Endothelial cell of umbilical vein (primary cell): ENCODE measurements at regions of chr4 and their contacts with region 1.

Region 1: GRCh38 chr4:153127760-153128494 is 76.3 kb upstream of the TRIM2 start:
- DNase-seq: peak; percentile 86
- H3K4me3 ChIP-seq: peak overlapping the region in 1 of 3 experiments; percentile 31
- H3K27ac ChIP-seq: no peak overlapping the region
- H3K4me1 ChIP-seq: no peaks in the 10 kb centered on the region
- H3K27me3 ChIP-seq: no peaks in the 10 kb centered on the region
- CTCF ChIP-seq: peak; percentile 77 to 82
- POLR2A ChIP-seq: no peak

Region 2: DNA sequence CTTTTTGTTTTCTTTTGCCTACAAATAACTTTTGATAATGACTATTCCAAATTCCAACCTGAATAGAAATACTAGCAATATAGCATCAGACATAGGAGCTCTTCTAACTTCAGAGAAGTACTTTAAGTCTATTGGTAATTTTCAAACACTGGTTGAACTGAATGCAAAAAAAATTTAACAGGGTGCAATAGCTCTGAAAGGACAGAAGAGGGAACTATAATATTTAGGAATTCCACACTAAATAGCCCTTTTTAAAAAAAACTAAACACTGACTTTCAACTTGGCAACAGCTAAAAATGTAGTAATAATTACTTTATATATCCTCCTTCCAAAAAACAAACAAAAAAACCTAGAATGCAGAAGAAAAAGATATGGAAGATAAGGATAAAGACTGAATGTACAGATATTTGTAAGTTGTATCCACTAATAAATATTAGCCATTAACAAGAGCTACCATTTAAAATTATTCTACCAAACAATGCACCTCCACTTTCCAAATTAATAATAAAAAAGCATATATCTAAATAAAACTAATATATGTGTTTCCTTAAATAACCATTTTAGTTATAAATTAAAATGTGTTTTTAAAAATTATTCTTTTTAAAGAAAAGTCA is 673.4 kb before region 1 on chr4:
- CTCF ChIA-PET with region 1: interaction called, 18 read pairs
- POLR2A ChIA-PET with region 1: no interaction called
- dilution Hi-C with region 1: no loop called
- intact Hi-C with region 1: loop called (anchors 5 kb)
- DNase-seq: peak; percentile 38
- H3K4me3 ChIP-seq: no peak overlapping the region
- H3K27ac ChIP-seq: no peak overlapping the region
- H3K4me1 ChIP-seq: no peaks in the 10 kb centered on the region
- H3K27me3 ChIP-seq: no peaks in the 10 kb centered on the region
- CTCF ChIP-seq: peak; percentile 30 to 35
- POLR2A ChIP-seq: no peak

Region 3: GRCh38 chr4:152594978-152595925 is 532.7 kb before region 1 on chr4:
- CTCF ChIA-PET with region 1: no interaction called
- POLR2A ChIA-PET with region 1: no interaction called
- dilution Hi-C with region 1: no loop called
- intact Hi-C with region 1: no loop called
- DNase-seq: no peak
- H3K4me3 ChIP-seq: no peak overlapping the region
- H3K27ac ChIP-seq: no peak overlapping the region
- H3K4me1 ChIP-seq: no peaks in the 10 kb centered on the region
- H3K27me3 ChIP-seq: peaks cover 7 to 8% of the 10 kb centered on the region in 2 experiments
- CTCF ChIP-seq: no peak
- POLR2A ChIP-seq: no peak

Region 4: GRCh38 chr4:152779513-152780266 is 348.2 kb before region 1 on chr4 and contains the starts of genes ARFIP1 and TIGD4:
- CTCF ChIA-PET with region 1: interaction called, 8 read pairs
- POLR2A ChIA-PET with region 1: no interaction called
- dilution Hi-C with region 1: no loop called
- intact Hi-C with region 1: loop called (anchors 2 kb)
- DNase-seq: peak; percentile 96
- H3K4me3 ChIP-seq: peak within 1 kb of the TSS; percentile 67 to 76 (median 74)
- H3K27ac ChIP-seq: peak within 1 kb of the TSS; percentile 56
- H3K4me1 ChIP-seq: peaks cover 21% of the 10 kb centered on the region
- H3K27me3 ChIP-seq: peaks cover 0 to 11% of the 10 kb centered on the region in 2 experiments
- CTCF ChIP-seq: peak in 1 of 2 donors; percentile 4
- POLR2A ChIP-seq: peak; percentile 62
- total RNA-seq, gene ARFIP1: 24.2 and 24.6 TPM in 2 replicates
- total RNA-seq, gene TIGD4: 0.14 and 0.18 TPM in 2 replicates

Region 5: GRCh38 chr4:152937336-152938236 is 190.3 kb before region 1 on chr4:
- CTCF ChIA-PET with region 1: interaction called, 3 read pairs
- POLR2A ChIA-PET with region 1: no interaction called
- dilution Hi-C with region 1: no loop called
- intact Hi-C with region 1: loop called (anchors 10 kb)
- DNase-seq: peak; percentile 26
- H3K4me3 ChIP-seq: peak overlapping the region; percentile 49 to 57 (median 51)
- H3K27ac ChIP-seq: no peak overlapping the region
- H3K4me1 ChIP-seq: peaks cover 17% of the 10 kb centered on the region
- H3K27me3 ChIP-seq: peaks cover 52 to 74% of the 10 kb centered on the region in 2 experiments
- CTCF ChIP-seq: no peak
- POLR2A ChIP-seq: no peak

Region 6: GRCh38 chr4:153089742-153090141 is 38.2 kb before region 1 on chr4:
- CTCF ChIA-PET with region 1: interaction called, 21 read pairs
- POLR2A ChIA-PET with region 1: no interaction called
- dilution Hi-C with region 1: no loop called
- intact Hi-C with region 1: no loop called
- DNase-seq: no peak
- H3K4me3 ChIP-seq: no peak overlapping the region
- H3K27ac ChIP-seq: no peak overlapping the region
- H3K4me1 ChIP-seq: no peaks in the 10 kb centered on the region
- H3K27me3 ChIP-seq: peaks cover 7 to 8% of the 10 kb centered on the region in 2 experiments
- CTCF ChIP-seq: no peak
- POLR2A ChIP-seq: no peak

Region 7: GRCh38 chr4:153115322-153116290 is 12.3 kb before region 1 on chr4:
- CTCF ChIA-PET with region 1: interaction called, 32 read pairs
- POLR2A ChIA-PET with region 1: no interaction called
- dilution Hi-C with region 1: no loop called
- intact Hi-C with region 1: no loop called
- DNase-seq: peak; percentile 38
- H3K4me3 ChIP-seq: peak overlapping the region in 1 of 3 experiments; percentile 38
- H3K27ac ChIP-seq: no peak overlapping the region
- H3K4me1 ChIP-seq: no peaks in the 10 kb centered on the region
- H3K27me3 ChIP-seq: peaks cover 0 to 2% of the 10 kb centered on the region in 2 experiments
- CTCF ChIP-seq: no peak
- POLR2A ChIP-seq: no peak

Region 8: DNA sequence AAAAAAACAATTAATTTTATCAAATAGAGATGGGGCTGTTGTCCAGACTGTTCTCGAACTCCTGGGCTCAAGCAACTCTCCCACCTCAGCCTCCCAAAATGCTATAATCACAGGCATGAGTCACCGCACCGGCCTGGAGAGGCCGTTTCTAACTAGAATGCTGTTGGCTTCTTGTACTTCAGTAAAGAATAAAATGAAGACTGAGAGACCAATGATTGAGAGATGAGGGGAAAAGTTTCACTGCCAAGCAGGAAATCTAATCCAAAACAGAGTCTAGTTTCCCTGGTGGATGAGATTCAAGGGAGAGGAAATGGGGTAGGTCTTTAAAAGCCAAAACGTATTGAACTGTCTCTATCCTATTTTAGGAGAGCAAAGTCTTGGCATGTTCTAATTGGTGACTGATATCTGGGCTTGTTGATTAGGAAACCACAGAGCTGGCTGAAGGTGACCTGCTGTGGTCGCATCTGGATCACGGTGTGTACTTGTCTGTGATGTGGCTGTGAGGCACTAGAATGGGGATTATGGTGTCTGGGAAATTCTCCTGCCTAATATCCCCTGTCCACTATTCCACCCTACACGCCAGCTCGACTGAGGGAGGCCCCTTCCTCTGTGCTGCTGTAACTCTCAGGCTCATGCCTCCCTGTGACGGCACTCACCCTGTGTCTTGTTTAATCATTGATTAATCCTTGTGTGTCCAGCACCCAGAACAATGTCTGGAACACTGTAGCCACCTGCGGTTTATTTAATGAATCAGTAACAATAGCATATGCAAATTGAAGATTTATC is 61.3 kb after region 1 on chr4:
- CTCF ChIA-PET with region 1: no interaction called
- POLR2A ChIA-PET with region 1: no interaction called
- dilution Hi-C with region 1: no loop called
- intact Hi-C with region 1: no loop called
- DNase-seq: no peak
- H3K4me3 ChIP-seq: no peak overlapping the region
- H3K27ac ChIP-seq: no peak overlapping the region
- H3K4me1 ChIP-seq: no peaks in the 10 kb centered on the region
- H3K27me3 ChIP-seq: peaks cover 0 to 17% of the 10 kb centered on the region in 2 experiments
- CTCF ChIP-seq: no peak
- POLR2A ChIP-seq: no peak